Dendritic cell treated with granulocyte-macrophage colony-stimulating factor and Interleukin-4, amounts not matched to agents 40 ng/mL and 50 ng/mL, for 4 days (primary cell): ENCODE measurements at regions of chr12 and their contacts with region 1.

Region 1: GRCh38 chr12:131830335-131830913 is 2.2 kb downstream of the MMP17 start:
- H3K4me3 Mint-ChIP-seq: peak overlapping the region; percentile 91
- H3K27ac Mint-ChIP-seq: peak overlapping the region; percentile 39
- H3K4me1 Mint-ChIP-seq: peaks cover 36% of the 10 kb centered on the region
- H3K27me3 Mint-ChIP-seq: peaks cover 38% of the 10 kb centered on the region

Region 2: DNA sequence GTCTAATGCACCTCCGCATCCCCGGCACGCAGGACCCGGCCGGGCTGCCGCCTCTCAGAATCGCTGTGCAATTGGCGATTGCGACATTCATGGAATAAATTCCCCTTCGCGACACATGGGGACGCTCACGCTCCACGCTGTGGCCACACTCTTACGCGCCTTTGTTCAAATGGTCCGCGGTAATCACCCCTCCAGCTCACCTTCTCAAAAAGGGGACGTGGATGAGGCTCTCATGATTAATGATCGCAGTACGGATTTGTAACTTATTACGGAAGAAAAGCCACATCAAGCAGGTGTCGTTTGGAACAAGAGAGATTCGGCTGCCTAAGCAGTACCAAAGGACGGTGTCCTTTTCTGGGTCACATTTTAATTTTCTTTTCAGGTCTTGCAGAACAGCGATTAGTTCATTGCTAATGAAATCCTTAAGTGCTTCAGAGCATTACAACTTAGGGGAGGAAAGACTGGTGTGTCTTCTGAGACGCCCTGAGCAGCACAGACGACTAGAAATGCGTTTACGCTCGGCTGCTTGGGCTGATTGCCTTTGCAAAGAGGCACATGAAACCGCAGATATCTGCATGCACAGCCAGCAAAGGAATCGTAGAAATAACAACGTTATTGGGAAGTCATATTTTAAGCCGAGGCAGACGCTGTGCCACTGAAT is 914.0 kb before region 1 on chr12:
- intact Hi-C with region 1: loop called (anchors 10 kb)
- H3K4me3 Mint-ChIP-seq: no peak overlapping the region
- H3K27ac Mint-ChIP-seq: no peak overlapping the region
- H3K4me1 Mint-ChIP-seq: peaks cover 7% of the 10 kb centered on the region
- H3K27me3 Mint-ChIP-seq: peaks cover 31% of the 10 kb centered on the region

Region 3: DNA sequence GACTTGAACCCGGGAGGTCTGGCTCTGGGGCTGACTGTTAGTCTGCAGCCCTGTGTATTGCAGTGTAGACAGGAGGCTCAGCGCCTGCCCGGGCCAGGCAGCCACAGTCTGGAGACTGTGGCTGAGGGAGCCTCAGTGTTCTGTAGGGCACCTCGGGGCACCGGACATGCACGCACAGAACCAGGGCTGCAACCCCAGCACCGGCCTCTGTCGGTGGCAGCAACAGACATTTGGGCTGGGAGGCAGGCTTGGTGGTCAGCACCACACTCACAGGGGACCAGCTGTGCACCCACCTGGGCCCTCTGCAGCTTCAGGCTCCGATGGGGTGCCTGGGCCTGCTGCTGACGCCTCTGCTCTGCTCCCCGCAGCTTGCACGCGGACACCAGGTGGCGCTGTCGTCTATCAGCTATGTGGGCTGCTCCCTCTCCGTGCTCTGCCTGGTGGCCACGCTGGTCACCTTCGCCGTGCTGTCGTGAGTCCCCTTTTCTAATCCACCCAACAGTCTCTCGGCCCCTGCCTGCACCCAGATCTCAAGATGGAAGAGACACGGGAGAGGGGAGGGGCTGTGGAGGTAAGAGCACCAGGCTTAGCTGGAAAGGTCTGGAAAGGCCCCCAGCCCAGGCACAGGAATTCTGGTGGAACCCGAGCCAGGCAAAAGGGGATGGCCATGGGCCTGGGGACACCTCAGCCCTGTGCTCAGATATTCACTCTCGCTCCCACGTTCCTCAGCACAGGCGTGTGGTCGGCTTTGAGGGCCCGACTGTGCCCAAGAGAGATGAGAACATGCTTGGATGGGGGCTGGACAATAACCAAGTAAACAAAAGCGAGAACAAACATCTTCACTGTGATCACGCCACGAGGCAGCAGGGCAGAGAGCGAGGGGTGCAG is 725.7 kb before region 1 on chr12:
- intact Hi-C with region 1: loop called (anchors 5 kb)
- H3K4me3 Mint-ChIP-seq: no peak overlapping the region
- H3K27ac Mint-ChIP-seq: no peak overlapping the region
- H3K4me1 Mint-ChIP-seq: peaks cover 28% of the 10 kb centered on the region
- H3K27me3 Mint-ChIP-seq: peaks cover 23% of the 10 kb centered on the region

Region 4: GRCh38 chr12:131608740-131609690 is 221.4 kb before region 1 on chr12:
- intact Hi-C with region 1: loop called (anchors 5 kb)
- H3K4me3 Mint-ChIP-seq: no peak overlapping the region
- H3K27ac Mint-ChIP-seq: no peak overlapping the region
- H3K4me1 Mint-ChIP-seq: peaks cover 59% of the 10 kb centered on the region
- H3K27me3 Mint-ChIP-seq: peaks cover 7% of the 10 kb centered on the region

Region 5: DNA sequence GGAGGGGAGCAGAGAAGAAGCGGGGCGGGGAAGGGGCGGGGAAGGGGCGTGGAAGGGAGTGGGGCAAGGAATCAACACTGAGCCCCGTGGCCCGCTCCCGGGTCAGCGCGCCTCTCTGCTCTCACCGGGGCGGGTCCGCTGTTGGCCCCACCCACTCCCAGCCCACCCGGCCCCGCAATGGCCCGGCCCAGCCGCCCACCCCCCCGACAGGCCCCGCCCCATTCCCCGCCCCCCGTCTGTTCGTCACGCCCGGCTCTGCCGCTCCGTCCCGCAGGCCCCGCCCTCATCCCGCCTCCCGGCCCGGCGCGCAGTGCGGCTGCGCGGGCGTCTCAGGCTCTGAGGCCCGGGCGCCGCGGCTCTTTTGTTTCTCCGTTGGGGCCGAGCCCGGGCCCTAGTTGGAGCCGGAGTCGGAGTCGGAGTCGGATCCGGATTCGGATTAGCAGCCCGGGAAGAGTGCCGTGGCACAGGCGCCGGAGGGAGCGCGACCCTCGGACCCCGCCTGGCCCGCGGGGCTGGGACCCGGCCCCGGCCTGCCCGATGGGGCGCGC is 64.0 kb after region 1 on chr12 and contains the start of gene ULK1:
- intact Hi-C with region 1: loop called (anchors 10 kb)
- H3K4me3 Mint-ChIP-seq: peak within 1 kb of the TSS; percentile 83
- H3K27ac Mint-ChIP-seq: peak within 1 kb of the TSS; percentile 87
- H3K4me1 Mint-ChIP-seq: peaks cover 27% of the 10 kb centered on the region
- H3K27me3 Mint-ChIP-seq: peaks cover 6% of the 10 kb centered on the region

Region 6: GRCh38 chr12:131949431-131950181 is 119.2 kb after region 1 on chr12 and contains the start of gene EP400:
- intact Hi-C with region 1: loop called (anchors 5 kb)
- H3K4me3 Mint-ChIP-seq: peak within 1 kb of the TSS; percentile 90
- H3K27ac Mint-ChIP-seq: peak within 1 kb of the TSS; percentile 81
- H3K4me1 Mint-ChIP-seq: peaks cover 36% of the 10 kb centered on the region
- H3K27me3 Mint-ChIP-seq: no peaks in the 10 kb centered on the region

Region 7: DNA sequence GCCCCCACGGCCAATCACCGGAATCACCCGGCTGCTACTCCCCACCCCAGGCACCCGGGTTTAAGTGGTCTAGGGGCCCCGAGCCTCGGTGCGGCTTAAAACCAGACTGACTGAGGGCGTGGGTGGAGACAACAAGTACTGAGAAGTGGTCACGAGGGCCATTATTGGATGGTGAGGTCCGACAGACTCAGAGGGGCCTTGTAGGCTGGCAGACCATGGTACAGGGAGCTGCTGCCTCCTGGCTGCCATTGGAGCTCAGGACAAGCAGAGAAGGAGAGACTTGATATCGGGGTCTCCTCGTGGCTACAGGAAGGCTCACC is 713.6 kb after region 1 on chr12:
- intact Hi-C with region 1: no loop called
- H3K4me3 Mint-ChIP-seq: no peak overlapping the region
- H3K27ac Mint-ChIP-seq: no peak overlapping the region
- H3K4me1 Mint-ChIP-seq: no peaks in the 10 kb centered on the region
- H3K27me3 Mint-ChIP-seq: no peaks in the 10 kb centered on the region